ENCODE measurements at regions of chr4 and their contacts with region 1.

Region 1: DNA sequence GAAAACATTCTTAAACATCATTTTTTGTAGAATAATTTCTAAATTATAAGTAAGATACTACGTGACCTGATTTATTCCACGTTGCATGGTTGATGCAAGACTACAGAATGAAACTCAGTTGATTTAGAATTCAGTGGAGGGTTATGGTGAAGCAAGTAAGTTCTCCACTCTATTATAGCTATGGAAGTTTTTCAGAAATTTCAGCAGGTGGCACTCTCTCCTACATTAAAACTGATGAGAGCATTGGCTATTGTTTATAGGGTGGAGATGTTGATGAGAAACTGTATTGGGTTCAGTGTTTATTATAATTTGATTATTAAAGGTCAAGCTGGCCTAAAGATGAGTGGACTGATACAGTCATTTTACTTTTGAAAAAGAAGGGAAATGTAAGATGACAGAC is 88.0 kb downstream of the FNIP2 start:
- DNase-seq: peak; percentile 9 to 23 (median 20)
- H3K4me3 ChIP-seq: no peak overlapping the region
- H3K4me3 Mint-ChIP-seq: no peak overlapping the region
- H3K27ac ChIP-seq: no peak overlapping the region
- H3K27ac Mint-ChIP-seq: no peak overlapping the region
- H3K4me1 ChIP-seq: peaks cover 0 to 8% of the 10 kb centered on the region in 2 donors
- H3K4me1 Mint-ChIP-seq: peaks cover 10% of the 10 kb centered on the region
- H3K27me3 ChIP-seq: no peaks in the 10 kb centered on the region
- H3K27me3 Mint-ChIP-seq: no peaks in the 10 kb centered on the region
- CTCF ChIP-seq: peak; percentile 63

Region 2: DNA sequence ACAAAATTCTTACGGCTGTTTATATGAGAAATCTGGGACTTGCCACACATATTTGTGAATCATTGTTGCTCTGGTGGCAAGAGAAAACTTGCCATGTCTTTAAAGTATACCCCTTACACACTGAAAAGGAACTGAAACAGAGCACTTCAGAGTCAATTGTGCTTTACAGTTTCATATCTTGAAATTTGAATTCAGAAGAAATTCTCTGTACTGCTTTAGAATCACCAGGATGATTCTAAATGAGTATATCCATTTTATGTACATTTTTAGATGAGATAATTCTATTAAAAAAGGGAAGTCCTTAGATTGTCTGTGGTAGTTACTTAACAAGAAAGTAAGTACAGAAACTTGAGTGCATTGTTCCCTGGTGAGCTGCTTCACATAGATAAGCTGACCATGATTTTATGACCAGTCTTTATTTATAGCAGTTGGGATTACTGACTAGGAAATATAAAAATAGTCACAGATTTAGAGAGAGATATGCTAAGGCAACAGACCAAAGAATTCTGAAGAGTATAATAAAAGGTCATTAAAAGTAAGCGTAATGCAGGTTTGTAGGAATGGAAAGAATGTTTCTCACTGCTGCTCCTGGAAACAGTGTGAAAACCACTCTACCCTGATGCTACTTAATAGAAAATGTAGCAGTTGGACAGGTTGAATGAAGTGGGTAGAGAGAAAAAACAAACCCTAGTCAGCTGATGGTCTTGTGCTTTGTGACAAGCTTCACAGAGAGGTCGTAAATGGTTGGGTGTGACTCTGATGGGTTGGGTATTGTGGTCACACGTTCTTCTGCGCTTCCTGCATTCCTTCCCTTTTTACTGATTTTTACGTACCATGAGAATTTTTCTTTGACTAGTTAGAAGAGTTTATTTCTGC is 47.0 kb before region 1 on chr4:
- intact Hi-C with region 1: loop called in 1 of 2 experiments (anchors 10 kb)
- DNase-seq: peak; percentile 89 to 94 (median 90)
- H3K4me3 ChIP-seq: peak overlapping the region; percentile 23 to 53 (median 30)
- H3K4me3 Mint-ChIP-seq: peak overlapping the region; percentile 35 to 82
- H3K27ac ChIP-seq: peak overlapping the region; percentile 95 to 98
- H3K27ac Mint-ChIP-seq: peak overlapping the region; percentile 96 to 99 (median 99)
- H3K4me1 ChIP-seq: peaks cover 91 to 98% of the 10 kb centered on the region in 2 donors
- H3K4me1 Mint-ChIP-seq: peaks cover 87% of the 10 kb centered on the region
- H3K27me3 ChIP-seq: no peaks in the 10 kb centered on the region
- H3K27me3 Mint-ChIP-seq: peaks cover 0 to 3% (median 0%) of the 10 kb centered on the region in 3 donors
- CTCF ChIP-seq: no peak

Region 3: GRCh38 chr4:159027535-159027934 is 170.7 kb after region 1 on chr4:
- intact Hi-C with region 1: no loop called
- DNase-seq: no peak
- H3K4me3 ChIP-seq: no peak overlapping the region
- H3K4me3 Mint-ChIP-seq: no peak overlapping the region
- H3K27ac ChIP-seq: no peak overlapping the region
- H3K27ac Mint-ChIP-seq: no peak overlapping the region
- H3K4me1 ChIP-seq: no peaks in the 10 kb centered on the region
- H3K4me1 Mint-ChIP-seq: peaks cover 5% of the 10 kb centered on the region
- H3K27me3 ChIP-seq: no peaks in the 10 kb centered on the region
- H3K27me3 Mint-ChIP-seq: peaks cover 0 to 2% (median 0%) of the 10 kb centered on the region in 3 donors
- CTCF ChIP-seq: no peak

Region 4: DNA sequence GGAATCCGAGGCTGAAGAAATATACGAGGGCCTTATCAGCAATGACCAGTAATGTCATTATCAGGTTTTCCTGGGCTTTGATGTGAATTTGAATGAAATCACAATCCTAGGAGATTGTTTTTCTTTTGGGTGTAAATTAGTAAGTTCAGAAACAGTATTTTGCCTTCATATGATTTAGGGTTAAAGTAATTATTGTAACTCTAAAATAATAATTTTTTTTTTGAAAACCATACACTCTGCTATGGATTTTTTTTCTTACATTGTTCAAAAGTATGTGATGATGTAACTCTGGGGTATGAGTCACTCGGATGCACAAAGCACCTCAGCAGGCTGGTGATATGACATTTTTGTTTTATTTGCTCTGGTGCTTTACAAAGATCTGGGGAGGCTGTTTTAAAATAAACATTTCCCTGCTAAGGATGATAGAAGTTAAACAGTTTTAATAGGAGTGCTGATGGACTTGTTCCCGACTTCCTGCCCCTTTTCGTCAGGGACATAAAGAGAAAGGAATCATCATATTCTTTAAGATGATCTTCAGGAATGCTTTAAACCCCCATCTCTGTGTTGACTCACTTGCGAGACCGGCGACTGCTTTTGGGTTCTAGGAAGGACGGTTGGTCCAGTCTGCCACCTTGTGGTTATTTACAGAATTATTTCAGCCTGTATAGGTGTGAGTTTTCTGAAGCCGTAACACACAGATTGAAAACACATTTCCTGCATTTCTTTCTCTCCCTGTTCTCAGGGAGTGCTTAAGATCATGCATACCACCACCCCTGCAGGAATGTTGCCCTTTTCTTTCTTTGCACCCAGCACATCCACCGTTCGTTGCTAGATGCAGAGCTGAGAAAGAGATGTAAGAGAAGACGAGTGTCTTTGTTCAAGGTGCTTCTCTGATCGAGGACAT is 318.5 kb after region 1 on chr4:
- intact Hi-C with region 1: loop called (anchors 5 to 10 kb)
- DNase-seq: peak; percentile 57 to 76 (median 73)
- H3K4me3 ChIP-seq: peak overlapping the region in 1 of 3 experiments; percentile 43
- H3K4me3 Mint-ChIP-seq: peak overlapping the region in 1 of 2 donors; percentile 66
- H3K27ac ChIP-seq: peak overlapping the region in 1 of 2 donors; percentile 54
- H3K27ac Mint-ChIP-seq: peak overlapping the region in 5 of 7 donors; percentile 16 to 82 (median 64)
- H3K4me1 ChIP-seq: peaks cover 56 to 67% of the 10 kb centered on the region in 2 donors
- H3K4me1 Mint-ChIP-seq: peaks cover 74% of the 10 kb centered on the region
- H3K27me3 ChIP-seq: no peaks in the 10 kb centered on the region
- H3K27me3 Mint-ChIP-seq: no peaks in the 10 kb centered on the region
- CTCF ChIP-seq: peak; percentile 83

Region 5: GRCh38 chr4:159201168-159201567 is 344.3 kb after region 1 on chr4:
- intact Hi-C with region 1: loop called in 1 of 2 experiments (anchors 5 kb)
- DNase-seq: no peak
- H3K4me3 ChIP-seq: no peak overlapping the region
- H3K4me3 Mint-ChIP-seq: no peak overlapping the region
- H3K27ac ChIP-seq: no peak overlapping the region
- H3K27ac Mint-ChIP-seq: no peak overlapping the region
- H3K4me1 ChIP-seq: peaks cover 7 to 8% of the 10 kb centered on the region in 2 donors
- H3K4me1 Mint-ChIP-seq: peaks cover 35% of the 10 kb centered on the region
- H3K27me3 ChIP-seq: no peaks in the 10 kb centered on the region
- H3K27me3 Mint-ChIP-seq: peaks cover 0 to 2% (median 0%) of the 10 kb centered on the region in 3 donors
- CTCF ChIP-seq: no peak